ENCODE measurements at regions of chr3 and their contacts with region 1.

Region 1: GRCh38 chr3:187974871-187975271 is 179.1 kb upstream of the LPP start:
- DNase-seq: no peak
- ATAC-seq: peak; percentile 67
- H3K4me3 Mint-ChIP-seq: peak overlapping the region; percentile 54
- H3K27ac Mint-ChIP-seq: peak overlapping the region; percentile 93
- H3K4me1 Mint-ChIP-seq: peaks cover 81% of the 10 kb centered on the region
- H3K27me3 Mint-ChIP-seq: no peaks in the 10 kb centered on the region

Region 2: DNA sequence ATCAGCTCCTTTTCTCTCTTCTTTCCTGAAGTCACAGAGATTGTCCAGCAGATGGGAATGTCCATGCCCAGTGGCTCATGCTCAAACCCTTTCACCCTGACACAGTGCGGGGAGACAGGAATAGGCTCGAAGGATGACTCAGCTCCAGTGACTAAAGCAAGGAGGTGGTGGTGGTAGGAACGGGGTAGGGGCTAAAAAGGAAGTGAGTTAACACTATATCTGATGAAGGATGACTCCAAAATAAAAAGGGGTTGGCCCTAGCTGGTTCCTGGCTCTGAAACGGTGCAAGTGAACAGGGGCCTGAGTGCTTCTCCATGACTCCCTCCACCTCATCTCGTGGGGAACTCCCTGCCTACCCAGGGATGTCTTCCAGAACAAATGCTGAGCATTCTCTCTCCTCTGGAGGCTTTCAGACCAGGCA is 11.7 kb after region 1 on chr3:
- CTCF ChIA-PET with region 1: interaction called, 15 read pairs
- POLR2A ChIA-PET with region 1: interaction called, 3 read pairs
- DNase-seq: no peak
- ATAC-seq: peak; percentile 60
- H3K4me3 Mint-ChIP-seq: no peak overlapping the region
- H3K27ac Mint-ChIP-seq: peak overlapping the region; percentile 27
- H3K4me1 Mint-ChIP-seq: peaks cover 53% of the 10 kb centered on the region
- H3K27me3 Mint-ChIP-seq: no peaks in the 10 kb centered on the region

Region 3: GRCh38 chr3:187994221-187995042 is 19.6 kb after region 1 on chr3:
- CTCF ChIA-PET with region 1: interaction called, 10 read pairs
- POLR2A ChIA-PET with region 1: interaction called, 16 read pairs
- DNase-seq: peak; percentile 67
- ATAC-seq: peak; percentile 82
- H3K4me3 Mint-ChIP-seq: peak overlapping the region; percentile 6
- H3K27ac Mint-ChIP-seq: peak overlapping the region; percentile 82
- H3K4me1 Mint-ChIP-seq: peaks cover 83% of the 10 kb centered on the region
- H3K27me3 Mint-ChIP-seq: no peaks in the 10 kb centered on the region

Region 4: GRCh38 chr3:188000361-188000861 is 25.5 kb after region 1 on chr3:
- CTCF ChIA-PET with region 1: interaction called, 10 read pairs
- POLR2A ChIA-PET with region 1: interaction called, 16 read pairs
- DNase-seq: peak; percentile 43
- ATAC-seq: peak; percentile 54
- H3K4me3 Mint-ChIP-seq: peak overlapping the region; percentile 76
- H3K27ac Mint-ChIP-seq: peak overlapping the region; percentile 94
- H3K4me1 Mint-ChIP-seq: peaks cover 88% of the 10 kb centered on the region
- H3K27me3 Mint-ChIP-seq: no peaks in the 10 kb centered on the region

Region 5: DNA sequence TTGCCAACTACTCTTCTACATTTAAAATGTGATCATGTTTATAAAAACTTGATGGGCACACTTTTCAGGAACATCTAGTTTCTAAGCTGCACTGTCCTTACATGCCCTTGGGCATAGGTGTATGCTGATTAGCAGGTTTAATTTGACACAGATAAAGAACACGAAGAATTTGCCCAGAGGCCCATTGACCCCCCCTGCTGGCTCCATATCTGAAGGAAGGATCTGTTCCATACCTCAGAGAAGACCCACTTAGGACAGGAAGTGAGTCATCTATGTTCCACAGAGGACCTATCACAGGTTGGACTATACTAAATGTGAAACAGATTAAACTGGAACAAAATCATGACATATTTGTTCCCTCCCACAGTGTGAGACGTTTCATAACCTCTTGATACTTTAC is 86.3 kb after region 1 on chr3:
- CTCF ChIA-PET with region 1: interaction called, 13 read pairs
- POLR2A ChIA-PET with region 1: no interaction called
- DNase-seq: peak; percentile 79
- ATAC-seq: peak; percentile 96
- H3K4me3 Mint-ChIP-seq: peak overlapping the region; percentile 24
- H3K27ac Mint-ChIP-seq: peak overlapping the region; percentile 83
- H3K4me1 Mint-ChIP-seq: peaks cover 31% of the 10 kb centered on the region
- H3K27me3 Mint-ChIP-seq: no peaks in the 10 kb centered on the region